ENCODE measurements at regions of chr1 and their contacts with region 1.

Region 1: DNA sequence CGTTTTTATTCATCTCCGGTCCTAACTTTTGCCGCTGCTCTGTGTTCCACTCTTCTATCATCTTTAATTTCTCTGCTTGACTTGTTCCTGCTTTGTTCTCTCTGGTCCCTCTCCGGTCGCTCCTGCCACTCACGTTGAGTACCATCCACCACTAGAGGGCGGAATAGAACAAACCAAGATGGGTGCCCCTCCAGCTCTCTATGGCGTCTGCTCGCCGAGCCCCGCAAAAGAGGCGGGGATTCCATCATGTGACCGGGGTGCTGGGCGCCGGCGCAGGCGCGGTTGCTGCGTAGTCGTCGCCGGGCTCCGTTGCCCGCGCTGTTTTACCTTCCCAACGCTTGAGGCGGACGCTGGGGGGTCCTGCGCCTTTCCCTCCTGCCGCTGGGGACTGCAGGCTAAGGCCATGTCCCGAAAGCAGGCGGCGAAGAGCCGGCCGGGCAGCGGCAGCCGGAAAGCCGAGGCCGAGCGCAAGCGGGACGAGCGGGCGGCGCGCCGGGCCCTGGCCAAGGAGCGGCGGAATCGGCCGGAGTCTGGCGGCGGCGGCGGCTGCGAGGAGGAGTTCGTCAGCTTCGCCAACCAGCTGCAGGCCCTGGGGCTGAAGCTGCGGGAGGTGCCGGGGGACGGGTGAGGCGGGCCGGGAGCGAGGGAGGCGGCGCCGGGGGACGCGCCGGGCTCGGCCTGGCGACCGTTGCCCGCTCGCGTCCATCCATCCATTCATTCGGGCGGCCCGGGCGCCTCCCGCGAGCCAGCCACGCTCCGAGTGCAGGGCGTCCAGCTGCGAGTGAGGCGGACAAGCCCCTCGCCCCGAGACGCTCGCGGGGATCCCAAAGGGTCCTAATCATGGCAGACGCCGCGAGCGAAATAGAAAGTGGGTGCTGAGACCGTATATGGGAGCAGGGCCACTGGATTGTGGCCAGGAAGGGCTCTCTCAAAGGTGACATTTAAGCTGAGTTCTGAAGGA is at the start of gene OTUD3:
- DNase-seq: peak; percentile 94 to 95 (median 95)
- H3K4me3 ChIP-seq: peak within 1 kb of the TSS; percentile 73
- H3K27ac ChIP-seq: peak within 1 kb of the TSS; percentile 66 to 80
- H3K4me1 ChIP-seq: peaks cover 8% of the 10 kb centered on the region
- H3K27me3 ChIP-seq: no peaks in the 10 kb centered on the region
- CTCF ChIP-seq: peak; percentile 88 to 96 (median 95)
- EP300 ChIP-seq: no peak
- POLR2A ChIP-seq: peak; percentile 90
- total RNA-seq, gene OTUD3: 3.8 to 19.7 (median 10.1) TPM

Region 2: GRCh38 chr1:19799877-19800804 is 82.2 kb before region 1 on chr1 and contains the start of gene TMCO4:
- intact Hi-C with region 1: loop called in 1 of 4 experiments (anchors 5 kb)
- DNase-seq: peak; percentile 39 to 66 (median 47)
- H3K4me3 ChIP-seq: peak within 1 kb of the TSS; percentile 72
- H3K27ac ChIP-seq: peak within 1 kb of the TSS; percentile 69 to 76
- H3K4me1 ChIP-seq: peaks cover 2% of the 10 kb centered on the region
- H3K27me3 ChIP-seq: no peaks in the 10 kb centered on the region
- CTCF ChIP-seq: no peak
- EP300 ChIP-seq: no peak
- POLR2A ChIP-seq: no peak
- total RNA-seq, gene TMCO4: 16.8 to 26.0 (median 21.4) TPM

Measured in ovary (tissue), 10 donors.